IMR-90 (cell line): ENCODE measurements at regions of chr2 and their contacts with region 1.

Region 1: GRCh38 chr2:216034065-216034464 is 20.7 kb upstream of the MREG start:
- DNase-seq: peak; percentile 77
- ATAC-seq: peak; percentile 59
- H3K4me3 ChIP-seq: no peak overlapping the region
- H3K27ac ChIP-seq: no peak overlapping the region
- H3K4me1 ChIP-seq: peaks cover 11% of the 10 kb centered on the region
- H3K27me3 ChIP-seq: no peaks in the 10 kb centered on the region
- CTCF ChIP-seq: peak; percentile 70
- POLR2A ChIP-seq: no peak
- RAD21 ChIP-seq: peak; percentile 55

Region 2: GRCh38 chr2:216666461-216667233 is 632.6 kb after region 1 on chr2:
- CTCF ChIA-PET with region 1: no interaction called
- POLR2A ChIA-PET with region 1: no interaction called
- dilution Hi-C with region 1: no loop called
- in situ Hi-C with region 1: no loop called
- intact Hi-C with region 1: loop called (anchors 10 kb)
- DNase-seq: peak; percentile 71
- ATAC-seq: peak; percentile 28
- H3K4me3 ChIP-seq: no peak overlapping the region
- H3K27ac ChIP-seq: no peak overlapping the region
- H3K4me1 ChIP-seq: no peaks in the 10 kb centered on the region; the same call in 1 of the 2 replicates
- H3K27me3 ChIP-seq: no peaks in the 10 kb centered on the region
- CTCF ChIP-seq: peak; percentile 97
- POLR2A ChIP-seq: peak; percentile 71
- RAD21 ChIP-seq: peak; percentile 99